Body of pancreas (tissue), 4 donors: ENCODE measurements at regions of chr3 and their contacts with region 1.

Region 1: DNA sequence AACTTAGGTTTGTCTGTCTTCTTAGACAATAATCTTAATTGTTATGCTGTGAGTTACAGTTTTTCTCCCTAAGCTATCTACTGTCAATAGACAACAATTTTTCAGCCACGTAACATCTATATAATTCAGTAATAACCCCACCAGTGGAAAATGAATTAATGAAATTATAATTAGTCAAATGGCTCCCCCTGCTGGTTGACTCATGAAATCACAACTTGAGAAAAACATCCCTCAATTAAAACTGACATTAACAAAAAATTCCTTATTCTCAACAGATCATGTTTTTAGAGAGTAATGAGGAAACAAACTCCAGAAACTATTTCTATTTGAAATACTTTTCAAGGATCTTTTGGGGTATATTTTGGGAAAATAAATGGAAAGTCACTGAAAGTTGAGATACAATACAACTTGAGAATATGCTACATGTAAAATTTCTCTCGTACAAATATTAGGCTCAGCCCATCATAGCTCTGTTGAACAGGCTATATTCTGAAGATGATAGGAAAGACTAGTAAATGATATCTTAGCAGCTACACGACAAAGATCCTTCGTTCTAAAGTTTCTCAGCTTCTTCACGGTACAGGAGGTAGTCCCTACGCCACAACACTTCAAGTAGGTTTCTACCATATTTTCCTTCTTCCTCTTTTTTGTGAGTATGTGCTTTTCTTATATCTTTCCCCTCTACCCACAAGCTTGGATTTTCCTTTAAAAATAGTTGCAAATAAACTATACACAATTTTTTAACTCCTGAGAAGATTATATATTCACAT is 20.7 kb downstream of the PPP1R2 start:
- DNase-seq: no peak
- ATAC-seq: no peak
- H3K4me3 ChIP-seq: no peak overlapping the region
- H3K27ac ChIP-seq: no peak overlapping the region
- H3K4me1 ChIP-seq: peaks cover 5% of the 10 kb centered on the region
- H3K27me3 ChIP-seq: no peaks in the 10 kb centered on the region
- CTCF ChIP-seq: peak; percentile 39 to 78 (median 71)
- POLR2A ChIP-seq: no peak

Region 2: GRCh38 chr3:195271116-195271858 is 251.2 kb before region 1 on chr3 and contains the start of gene XXYLT1:
- intact Hi-C with region 1: loop called (anchors 5 kb)
- DNase-seq: peak; percentile 83 to 90 (median 88)
- ATAC-seq: peak; percentile 93
- H3K4me3 ChIP-seq: peak within 1 kb of the TSS; percentile 77 to 92
- H3K27ac ChIP-seq: peak within 1 kb of the TSS; percentile 13 to 90 (median 66)
- H3K4me1 ChIP-seq: peaks cover 20% of the 10 kb centered on the region
- H3K27me3 ChIP-seq: no peaks in the 10 kb centered on the region
- CTCF ChIP-seq: peak; percentile 94 to 98 (median 96)
- POLR2A ChIP-seq: no peak
- total RNA-seq, gene XXYLT1: 1.3 to 4.2 TPM

Region 3: DNA sequence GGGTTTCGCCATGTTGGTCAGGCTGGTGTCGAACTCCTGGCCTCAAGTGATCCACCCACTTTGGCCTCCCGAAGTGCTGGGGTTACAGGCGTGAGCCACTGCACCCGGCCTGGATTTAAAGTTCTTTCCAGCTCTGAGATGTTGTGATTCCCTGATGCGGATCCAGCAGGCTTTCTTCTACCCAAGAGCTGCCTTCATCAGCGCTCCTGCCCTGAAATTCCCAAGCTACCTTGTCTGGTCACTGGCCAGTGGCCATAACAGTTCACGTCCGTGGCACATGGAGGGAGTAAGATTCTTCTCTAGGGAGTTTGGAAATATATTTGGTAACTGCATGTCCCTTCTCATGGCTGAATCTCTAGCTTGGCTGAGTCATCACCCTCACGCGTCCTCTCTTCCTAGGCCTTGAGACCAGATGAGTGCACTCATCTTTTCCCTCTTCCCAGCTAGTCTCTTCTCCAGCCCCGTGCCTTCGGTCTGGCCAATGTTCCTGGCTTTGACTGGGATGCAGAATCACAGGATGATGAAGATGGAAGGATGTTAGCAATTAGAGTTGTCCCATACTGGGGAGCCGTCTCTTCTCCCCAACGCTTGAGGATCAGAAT is 91.1 kb after region 1 on chr3:
- intact Hi-C with region 1: no loop called
- DNase-seq: no peak
- ATAC-seq: no peak
- H3K4me3 ChIP-seq: no peak overlapping the region
- H3K27ac ChIP-seq: peak overlapping the region in 2 of 4 donors; percentile 42 to 66
- H3K4me1 ChIP-seq: no peaks in the 10 kb centered on the region
- H3K27me3 ChIP-seq: no peaks in the 10 kb centered on the region
- CTCF ChIP-seq: no peak
- POLR2A ChIP-seq: no peak